Thyroid gland (tissue), 4 donors: ENCODE measurements at regions of chr1 and their contacts with region 1.

Region 1: GRCh38 chr1:214466403-214467077 is 84.9 kb downstream of the PTPN14 start:
- DNase-seq: no peak
- H3K4me3 ChIP-seq: no peak overlapping the region
- H3K27ac ChIP-seq: no peak overlapping the region
- H3K4me1 ChIP-seq: peaks cover 10 to 15% of the 10 kb centered on the region in 2 donors
- H3K27me3 ChIP-seq: no peaks in the 10 kb centered on the region
- CTCF ChIP-seq: no peak
- POLR2A ChIP-seq: no peak

Region 2: GRCh38 chr1:214548988-214549387 is 82.4 kb after region 1 on chr1:
- intact Hi-C with region 1: loop called (anchors 10 kb)
- DNase-seq: peak; percentile 88 to 90
- H3K4me3 ChIP-seq: peak overlapping the region in 1 of 3 donors; percentile 2
- H3K27ac ChIP-seq: peak overlapping the region in 2 of 3 donors; percentile 100
- H3K4me1 ChIP-seq: peaks cover 28 to 31% of the 10 kb centered on the region in 2 donors
- H3K27me3 ChIP-seq: no peaks in the 10 kb centered on the region
- CTCF ChIP-seq: no peak
- POLR2A ChIP-seq: peak in 1 of 2 donors; percentile 59

Region 3: DNA sequence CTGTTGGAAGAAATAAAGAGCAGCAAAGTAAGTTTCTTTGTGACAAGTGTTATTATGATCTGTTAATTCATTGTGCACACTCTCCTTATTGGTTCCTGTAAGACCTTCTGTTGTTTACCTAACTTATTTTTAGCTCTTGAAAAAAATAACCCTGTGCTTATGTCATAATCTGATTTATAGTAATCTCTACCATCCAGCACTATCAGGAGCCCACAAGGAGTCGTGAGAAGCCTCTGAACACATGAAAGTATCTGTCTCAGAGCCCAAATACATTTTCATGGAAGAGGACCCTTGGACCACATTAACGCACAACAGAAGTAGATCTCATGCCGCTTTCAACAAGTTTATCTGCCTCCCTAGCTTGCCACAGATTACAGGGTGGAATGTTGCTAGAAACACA is 182.3 kb after region 1 on chr1:
- intact Hi-C with region 1: no loop called
- DNase-seq: no peak
- H3K4me3 ChIP-seq: no peak overlapping the region
- H3K27ac ChIP-seq: no peak overlapping the region
- H3K4me1 ChIP-seq: no peaks in the 10 kb centered on the region
- H3K27me3 ChIP-seq: no peaks in the 10 kb centered on the region
- CTCF ChIP-seq: no peak
- POLR2A ChIP-seq: no peak